ENCODE measurements at regions of chr17 and their contacts with region 1.

Region 1: GRCh38 chr17:71084219-71084618 is 914.9 kb downstream of the KCNJ2 start:
- DNase-seq: peak; percentile 69
- ATAC-seq: peak; percentile 87
- H3K4me3 ChIP-seq: no peak overlapping the region
- H3K27ac ChIP-seq: no peak overlapping the region
- H3K4me1 ChIP-seq: peaks cover 0 to 6% of the 10 kb centered on the region in 2 experiments; a peak in 1 of 4 replicates
- H3K27me3 ChIP-seq: no peaks in the 10 kb centered on the region
- CTCF ChIP-seq: peak; percentile 69 to 78 (median 73); a peak in 5 of 6 replicates
- POLR2A ChIP-seq: no peak
- RAD21 ChIP-seq: peak; percentile 85

Region 2: GRCh38 chr17:70636517-70637133 is 447.6 kb before region 1 on chr17:
- CTCF ChIA-PET with region 1: no interaction called
- POLR2A ChIA-PET with region 1: no interaction called
- RAD21 ChIA-PET with region 1: no interaction called
- intact Hi-C with region 1: loop called (anchors 1 kb)
- DNase-seq: peak; percentile 54
- ATAC-seq: peak; percentile 63
- H3K4me3 ChIP-seq: no peak overlapping the region
- H3K27ac ChIP-seq: no peak overlapping the region
- H3K4me1 ChIP-seq: no peaks in the 10 kb centered on the region
- H3K27me3 ChIP-seq: no peaks in the 10 kb centered on the region
- CTCF ChIP-seq: peak; percentile 61 to 86 (median 70); a peak in 5 of 6 replicates
- POLR2A ChIP-seq: no peak
- RAD21 ChIP-seq: peak; percentile 91

Region 3: DNA sequence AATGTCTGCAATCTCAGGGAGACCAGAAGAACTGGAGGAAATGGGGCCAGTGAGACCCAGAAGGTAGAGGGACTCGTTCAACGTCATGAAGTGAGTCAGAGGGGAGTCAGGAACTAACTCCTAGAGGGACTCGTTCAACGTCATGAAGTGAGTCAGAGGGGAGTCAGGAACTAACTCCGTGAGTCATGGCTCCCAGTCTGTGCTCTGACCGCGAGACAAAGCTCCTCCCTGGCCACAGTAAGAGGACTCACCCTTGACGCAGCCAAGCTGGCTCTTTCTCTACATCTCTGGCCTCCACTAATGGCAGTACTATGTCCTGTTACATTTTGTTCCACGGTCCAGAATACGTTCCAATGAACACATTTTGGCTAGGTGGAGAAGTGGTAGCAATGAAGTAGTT is 12.4 kb before region 1 on chr17:
- CTCF ChIA-PET with region 1: interaction called, 12 read pairs
- POLR2A ChIA-PET with region 1: interaction called, 5 read pairs
- RAD21 ChIA-PET with region 1: no interaction called
- intact Hi-C with region 1: no loop called
- DNase-seq: peak; percentile 98
- ATAC-seq: peak; percentile 100
- H3K4me3 ChIP-seq: peak overlapping the region in 1 of 2 experiments; percentile 34; a peak in 2 of 4 replicates
- H3K27ac ChIP-seq: peak overlapping the region; percentile 32; the same call in 1 of the 2 replicates
- H3K4me1 ChIP-seq: peaks cover 6 to 22% of the 10 kb centered on the region in 2 experiments; a peak in 3 of 4 replicates
- H3K27me3 ChIP-seq: no peaks in the 10 kb centered on the region
- CTCF ChIP-seq: no peak
- POLR2A ChIP-seq: peak; percentile 51
- RAD21 ChIP-seq: no peak